Aorta (tissue), 5 donors: ENCODE measurements at regions of chr2 and their contacts with region 1.

Region 1: GRCh38 chr2:140863713-140864112 is 1267.1 kb downstream of the LRP1B start:
- DNase-seq: no peak
- ATAC-seq: no peak
- H3K4me3 ChIP-seq: no peak overlapping the region
- H3K27ac ChIP-seq: no peak overlapping the region
- H3K4me1 ChIP-seq: no peaks in the 10 kb centered on the region
- H3K27me3 ChIP-seq: no peaks in the 10 kb centered on the region

Region 2: GRCh38 chr2:139790807-139791752 is 1072.6 kb before region 1 on chr2:
- intact Hi-C with region 1: loop called (anchors 5 to 10 kb)
- DNase-seq: no peak
- ATAC-seq: no peak
- H3K4me3 ChIP-seq: no peak overlapping the region
- H3K27ac ChIP-seq: no peak overlapping the region
- H3K4me1 ChIP-seq: no peaks in the 10 kb centered on the region
- H3K27me3 ChIP-seq: no peaks in the 10 kb centered on the region

Region 3: GRCh38 chr2:140085674-140086073 is 778.0 kb before region 1 on chr2:
- intact Hi-C with region 1: loop called (anchors 5 to 10 kb)
- DNase-seq: no peak
- ATAC-seq: peak; percentile 51
- H3K4me3 ChIP-seq: no peak overlapping the region
- H3K27ac ChIP-seq: no peak overlapping the region
- H3K4me1 ChIP-seq: no peaks in the 10 kb centered on the region
- H3K27me3 ChIP-seq: no peaks in the 10 kb centered on the region

Region 4: DNA sequence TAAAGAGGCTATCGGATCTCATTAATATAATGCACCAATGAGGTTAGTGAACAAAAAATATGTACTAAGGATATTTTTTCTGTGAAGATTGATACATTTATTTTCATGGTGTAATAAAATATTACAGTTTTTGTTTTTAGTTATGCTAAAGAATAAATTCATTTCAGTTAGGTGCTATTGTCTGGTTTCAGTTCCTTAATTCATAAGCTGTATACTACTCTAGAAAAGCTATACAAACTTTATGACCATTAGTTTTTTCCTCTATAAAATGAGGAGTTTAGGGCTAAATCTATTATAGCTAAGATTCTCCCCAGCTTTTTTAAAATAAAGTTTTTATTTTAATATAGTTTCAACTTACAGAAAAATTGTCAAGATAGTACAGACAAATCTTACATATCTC is 771.8 kb before region 1 on chr2:
- intact Hi-C with region 1: loop called (anchors 5 to 10 kb)
- DNase-seq: no peak
- ATAC-seq: no peak
- H3K4me3 ChIP-seq: no peak overlapping the region
- H3K27ac ChIP-seq: no peak overlapping the region
- H3K4me1 ChIP-seq: no peaks in the 10 kb centered on the region
- H3K27me3 ChIP-seq: no peaks in the 10 kb centered on the region